CD8-positive, alpha-beta T cell (primary cell): ENCODE measurements at regions of chr12 and their contacts with region 1.

Region 1: GRCh38 chr12:92389466-92389865 is 243.8 kb upstream of the BTG1 start:
- DNase-seq: no peak
- ATAC-seq: no peak
- H3K4me3 ChIP-seq: no peak overlapping the region
- H3K4me3 Mint-ChIP-seq: no peak overlapping the region
- H3K27ac ChIP-seq: no peak overlapping the region
- H3K27ac Mint-ChIP-seq: no peak overlapping the region
- H3K4me1 ChIP-seq: peaks cover 21% of the 10 kb centered on the region
- H3K4me1 Mint-ChIP-seq: peaks cover 47% of the 10 kb centered on the region
- H3K27me3 ChIP-seq: no peaks in the 10 kb centered on the region
- H3K27me3 Mint-ChIP-seq: no peaks in the 10 kb centered on the region
- CTCF ChIP-seq: no peak

Region 2: GRCh38 chr12:92349635-92350034 is 39.8 kb before region 1 on chr12:
- CTCF ChIA-PET with region 1: no interaction called
- POLR2A ChIA-PET with region 1: no interaction called
- intact Hi-C with region 1: loop called in 1 of 2 experiments (anchors 5 kb)
- DNase-seq: no peak
- ATAC-seq: no peak
- H3K4me3 ChIP-seq: no peak overlapping the region
- H3K4me3 Mint-ChIP-seq: no peak overlapping the region
- H3K27ac ChIP-seq: no peak overlapping the region
- H3K27ac Mint-ChIP-seq: no peak overlapping the region
- H3K4me1 ChIP-seq: no peaks in the 10 kb centered on the region
- H3K4me1 Mint-ChIP-seq: peaks cover 14% of the 10 kb centered on the region
- H3K27me3 ChIP-seq: no peaks in the 10 kb centered on the region
- H3K27me3 Mint-ChIP-seq: no peaks in the 10 kb centered on the region
- CTCF ChIP-seq: no peak